Naive thymus-derived CD4-positive, alpha-beta T cell (primary cell): ENCODE measurements at regions of chr12 and their contacts with region 1.

Region 1: GRCh38 chr12:12032851-12033588 is 37.7 kb upstream of the BCL2L14 start:
- DNase-seq: peak; percentile 46 to 79 (median 65)
- ATAC-seq: peak; percentile 82
- H3K4me3 ChIP-seq: peak overlapping the region; percentile 63
- H3K4me3 Mint-ChIP-seq: peak overlapping the region; percentile 75 to 87 (median 82)
- H3K27ac ChIP-seq: no peak overlapping the region
- H3K27ac Mint-ChIP-seq: peak overlapping the region; percentile 18 to 91 (median 72)
- H3K4me1 ChIP-seq: peaks cover 9 to 13% of the 10 kb centered on the region in 2 donors
- H3K4me1 Mint-ChIP-seq: peaks cover 14 to 50% (median 17%) of the 10 kb centered on the region in 7 donors
- H3K27me3 ChIP-seq: no peaks in the 10 kb centered on the region
- H3K27me3 Mint-ChIP-seq: no peaks in the 10 kb centered on the region

Region 2: DNA sequence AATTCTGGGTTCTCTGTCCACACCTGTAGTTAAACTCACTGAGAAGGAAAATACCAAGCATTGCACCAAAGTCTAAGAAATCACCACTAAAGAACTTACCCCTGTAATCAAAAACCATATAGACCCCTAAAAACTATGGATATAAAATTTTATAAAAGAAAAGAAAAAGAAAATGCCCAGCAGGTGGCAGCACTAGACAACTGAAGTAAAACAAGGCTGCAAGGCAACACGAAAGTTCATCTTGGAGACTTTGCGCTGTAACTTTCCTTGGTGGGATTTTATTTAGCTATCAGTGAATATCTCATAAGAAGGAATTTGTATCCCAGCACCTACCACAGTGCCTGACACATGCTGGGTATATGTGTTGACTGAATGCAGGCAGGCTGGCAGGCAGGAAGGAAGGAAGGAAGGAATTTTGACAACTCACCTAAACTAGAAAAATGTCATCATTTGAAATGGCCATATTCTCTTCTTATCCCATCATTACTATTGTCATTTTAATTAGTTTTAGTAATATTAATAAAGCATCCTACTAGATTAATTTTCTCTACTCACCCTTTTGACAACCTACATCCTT is 451.8 kb before region 1 on chr12:
- CTCF ChIA-PET with region 1: interaction called, 213 read pairs
- POLR2A ChIA-PET with region 1: interaction called, 6 read pairs
- intact Hi-C with region 1: loop called (anchors 1 kb)
- DNase-seq: peak; percentile 22 to 73 (median 64)
- ATAC-seq: peak; percentile 60
- H3K4me3 ChIP-seq: no peak overlapping the region
- H3K4me3 Mint-ChIP-seq: peak overlapping the region in 1 of 10 donors; percentile 65
- H3K27ac ChIP-seq: no peak overlapping the region
- H3K27ac Mint-ChIP-seq: peak overlapping the region in 2 of 9 donors; percentile 28 to 88
- H3K4me1 ChIP-seq: no peaks in the 10 kb centered on the region
- H3K4me1 Mint-ChIP-seq: peaks cover 0 to 10% (median 4%) of the 10 kb centered on the region in 7 donors
- H3K27me3 ChIP-seq: no peaks in the 10 kb centered on the region
- H3K27me3 Mint-ChIP-seq: peaks cover 0 to 14% (median 0%) of the 10 kb centered on the region in 5 donors

Region 3: GRCh38 chr12:11730299-11731041 is 302.6 kb before region 1 on chr12:
- CTCF ChIA-PET with region 1: interaction called, 4 read pairs
- POLR2A ChIA-PET with region 1: interaction called, 3 read pairs
- intact Hi-C with region 1: loop called (anchors 1 to 2 kb)
- DNase-seq: no peak
- ATAC-seq: peak; percentile 21
- H3K4me3 ChIP-seq: no peak overlapping the region
- H3K4me3 Mint-ChIP-seq: peak overlapping the region; percentile 39 to 90 (median 71)
- H3K27ac ChIP-seq: peak overlapping the region; percentile 34
- H3K27ac Mint-ChIP-seq: peak overlapping the region; percentile 81 to 98 (median 91)
- H3K4me1 ChIP-seq: peaks cover 25 to 60% of the 10 kb centered on the region in 2 donors
- H3K4me1 Mint-ChIP-seq: peaks cover 61 to 86% (median 76%) of the 10 kb centered on the region in 7 donors
- H3K27me3 ChIP-seq: no peaks in the 10 kb centered on the region
- H3K27me3 Mint-ChIP-seq: no peaks in the 10 kb centered on the region

Region 4: GRCh38 chr12:11812586-11813427 is 220.2 kb before region 1 on chr12:
- CTCF ChIA-PET with region 1: interaction called, 4 read pairs
- POLR2A ChIA-PET with region 1: no interaction called
- intact Hi-C with region 1: loop called (anchors 1 to 5 kb)
- DNase-seq: peak in 7 of 9 donors; percentile 5 to 42 (median 27)
- ATAC-seq: peak; percentile 79
- H3K4me3 ChIP-seq: no peak overlapping the region
- H3K4me3 Mint-ChIP-seq: peak overlapping the region; percentile 61 to 81 (median 74)
- H3K27ac ChIP-seq: peak overlapping the region; percentile 50
- H3K27ac Mint-ChIP-seq: peak overlapping the region; percentile 76 to 93 (median 88)
- H3K4me1 ChIP-seq: peaks cover 0 to 10% of the 10 kb centered on the region in 2 donors
- H3K4me1 Mint-ChIP-seq: peaks cover 35 to 66% (median 51%) of the 10 kb centered on the region in 7 donors
- H3K27me3 ChIP-seq: no peaks in the 10 kb centered on the region
- H3K27me3 Mint-ChIP-seq: no peaks in the 10 kb centered on the region

Region 5: GRCh38 chr12:11853126-11853525 is 179.9 kb before region 1 on chr12:
- CTCF ChIA-PET with region 1: interaction called, 3 read pairs
- POLR2A ChIA-PET with region 1: no interaction called
- intact Hi-C with region 1: loop called in 1 of 2 experiments (anchors 5 kb)
- DNase-seq: no peak
- ATAC-seq: no peak
- H3K4me3 ChIP-seq: no peak overlapping the region
- H3K4me3 Mint-ChIP-seq: peak overlapping the region in 1 of 10 donors; percentile 22
- H3K27ac ChIP-seq: no peak overlapping the region
- H3K27ac Mint-ChIP-seq: peak overlapping the region in 3 of 9 donors; percentile 12 to 43 (median 35)
- H3K4me1 ChIP-seq: peaks cover 0 to 5% of the 10 kb centered on the region in 2 donors
- H3K4me1 Mint-ChIP-seq: peaks cover 12 to 44% (median 25%) of the 10 kb centered on the region in 7 donors
- H3K27me3 ChIP-seq: no peaks in the 10 kb centered on the region
- H3K27me3 Mint-ChIP-seq: no peaks in the 10 kb centered on the region

Region 6: GRCh38 chr12:11916771-11917170 is 116.2 kb before region 1 on chr12:
- CTCF ChIA-PET with region 1: interaction called, 7 read pairs
- POLR2A ChIA-PET with region 1: no interaction called
- intact Hi-C with region 1: loop called in 1 of 2 experiments (anchors 2 kb)
- DNase-seq: no peak
- ATAC-seq: no peak
- H3K4me3 ChIP-seq: no peak overlapping the region
- H3K4me3 Mint-ChIP-seq: no peak overlapping the region
- H3K27ac ChIP-seq: no peak overlapping the region
- H3K27ac Mint-ChIP-seq: peak overlapping the region in 1 of 9 donors; percentile 16
- H3K4me1 ChIP-seq: no peaks in the 10 kb centered on the region
- H3K4me1 Mint-ChIP-seq: peaks cover 0 to 5% (median 0%) of the 10 kb centered on the region in 7 donors
- H3K27me3 ChIP-seq: no peaks in the 10 kb centered on the region
- H3K27me3 Mint-ChIP-seq: peaks cover 0 to 5% (median 0%) of the 10 kb centered on the region in 5 donors

Region 7: GRCh38 chr12:12327802-12328201 is 294.8 kb after region 1 on chr12:
- CTCF ChIA-PET with region 1: interaction called, 8 read pairs
- POLR2A ChIA-PET with region 1: no interaction called
- intact Hi-C with region 1: loop called (anchors 1 to 5 kb)
- DNase-seq: peak in 7 of 9 donors; percentile 37 to 74 (median 64)
- ATAC-seq: peak; percentile 89
- H3K4me3 ChIP-seq: no peak overlapping the region
- H3K4me3 Mint-ChIP-seq: peak overlapping the region in 1 of 10 donors; percentile 23
- H3K27ac ChIP-seq: peak overlapping the region; percentile 20
- H3K27ac Mint-ChIP-seq: peak overlapping the region in 7 of 9 donors; percentile 39 to 81 (median 72)
- H3K4me1 ChIP-seq: peaks cover 0 to 7% of the 10 kb centered on the region in 2 donors
- H3K4me1 Mint-ChIP-seq: peaks cover 3 to 14% (median 10%) of the 10 kb centered on the region in 7 donors
- H3K27me3 ChIP-seq: no peaks in the 10 kb centered on the region
- H3K27me3 Mint-ChIP-seq: no peaks in the 10 kb centered on the region